IMR-90 (cell line): ENCODE measurements at regions of chr2 and their contacts with region 1.

Region 1: DNA sequence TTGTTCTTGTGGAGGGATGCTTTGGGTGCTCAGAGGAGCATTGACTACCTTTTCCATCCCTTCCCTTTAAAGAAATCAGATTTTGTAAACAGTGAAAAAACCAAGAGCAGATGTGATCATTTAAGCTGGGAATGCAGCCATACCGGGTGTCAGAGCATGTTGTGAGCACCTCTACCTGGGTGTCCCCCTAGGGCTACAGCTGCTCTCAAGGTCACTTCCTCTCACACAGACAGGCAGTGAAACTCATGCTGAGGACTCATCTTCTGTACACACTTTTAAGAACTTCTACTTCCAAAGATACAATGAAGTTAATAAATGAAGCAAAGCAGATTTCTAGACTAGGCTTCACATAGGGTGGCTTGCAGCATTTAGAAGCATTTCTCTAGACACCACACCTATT is 48.4 kb upstream of the FRZB start:
- DNase-seq: no peak
- ATAC-seq: no peak; the same call in 1 of the 2 replicates
- H3K4me3 ChIP-seq: no peak overlapping the region
- H3K27ac ChIP-seq: no peak overlapping the region
- H3K4me1 ChIP-seq: peaks cover 11% of the 10 kb centered on the region
- H3K27me3 ChIP-seq: no peaks in the 10 kb centered on the region
- CTCF ChIP-seq: no peak
- POLR2A ChIP-seq: no peak
- RAD21 ChIP-seq: no peak

Region 2: GRCh38 chr2:182506606-182507005 is 408.2 kb before region 1 on chr2:
- CTCF ChIA-PET with region 1: no interaction called
- POLR2A ChIA-PET with region 1: no interaction called
- dilution Hi-C with region 1: no loop called
- in situ Hi-C with region 1: no loop called
- intact Hi-C with region 1: no loop called
- DNase-seq: peak; percentile 65
- ATAC-seq: no peak
- H3K4me3 ChIP-seq: no peak overlapping the region
- H3K27ac ChIP-seq: no peak overlapping the region
- H3K4me1 ChIP-seq: peaks cover 7% of the 10 kb centered on the region
- H3K27me3 ChIP-seq: no peaks in the 10 kb centered on the region
- CTCF ChIP-seq: no peak
- POLR2A ChIP-seq: no peak
- RAD21 ChIP-seq: no peak

Region 3: DNA sequence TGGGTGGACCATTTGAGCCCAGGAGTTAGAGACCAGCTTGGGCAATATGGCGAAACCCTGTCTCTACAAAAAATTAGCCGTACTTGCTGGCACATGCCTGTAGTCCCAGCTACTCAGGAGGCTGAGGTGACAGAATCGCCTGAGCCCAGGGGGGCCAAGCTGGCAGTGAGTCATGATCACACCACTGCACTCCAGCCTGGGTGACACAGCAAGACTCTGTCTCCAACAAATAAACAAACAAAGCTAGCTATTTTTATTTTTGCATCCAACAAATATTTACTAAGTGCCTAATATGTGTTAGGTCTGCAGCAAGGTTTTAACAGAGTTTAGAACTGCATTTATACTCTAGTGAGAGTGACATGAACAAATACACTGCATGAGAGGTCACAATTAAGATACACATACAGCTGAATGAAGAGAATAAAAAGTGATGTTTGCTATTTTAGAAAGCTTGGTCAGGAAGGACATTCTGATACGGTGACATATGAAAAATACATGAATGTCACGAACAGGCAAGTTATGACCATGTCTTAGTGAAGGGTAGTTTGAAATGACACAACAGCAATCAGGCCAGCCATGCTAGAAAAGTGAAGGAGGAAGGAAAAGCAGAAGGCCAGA is 34.8 kb after region 1 on chr2:
- CTCF ChIA-PET with region 1: no interaction called
- POLR2A ChIA-PET with region 1: no interaction called
- dilution Hi-C with region 1: no loop called
- in situ Hi-C with region 1: no loop called
- intact Hi-C with region 1: loop called (anchors 5 kb)
- DNase-seq: peak; percentile 30
- ATAC-seq: peak; percentile 42; the same call in 1 of the 2 replicates
- H3K4me3 ChIP-seq: no peak overlapping the region
- H3K27ac ChIP-seq: no peak overlapping the region
- H3K4me1 ChIP-seq: peaks cover 3% of the 10 kb centered on the region
- H3K27me3 ChIP-seq: no peaks in the 10 kb centered on the region
- CTCF ChIP-seq: no peak
- POLR2A ChIP-seq: no peak
- RAD21 ChIP-seq: no peak